ENCODE measurements at regions of chr19 and their contacts with region 1.

Region 1: DNA sequence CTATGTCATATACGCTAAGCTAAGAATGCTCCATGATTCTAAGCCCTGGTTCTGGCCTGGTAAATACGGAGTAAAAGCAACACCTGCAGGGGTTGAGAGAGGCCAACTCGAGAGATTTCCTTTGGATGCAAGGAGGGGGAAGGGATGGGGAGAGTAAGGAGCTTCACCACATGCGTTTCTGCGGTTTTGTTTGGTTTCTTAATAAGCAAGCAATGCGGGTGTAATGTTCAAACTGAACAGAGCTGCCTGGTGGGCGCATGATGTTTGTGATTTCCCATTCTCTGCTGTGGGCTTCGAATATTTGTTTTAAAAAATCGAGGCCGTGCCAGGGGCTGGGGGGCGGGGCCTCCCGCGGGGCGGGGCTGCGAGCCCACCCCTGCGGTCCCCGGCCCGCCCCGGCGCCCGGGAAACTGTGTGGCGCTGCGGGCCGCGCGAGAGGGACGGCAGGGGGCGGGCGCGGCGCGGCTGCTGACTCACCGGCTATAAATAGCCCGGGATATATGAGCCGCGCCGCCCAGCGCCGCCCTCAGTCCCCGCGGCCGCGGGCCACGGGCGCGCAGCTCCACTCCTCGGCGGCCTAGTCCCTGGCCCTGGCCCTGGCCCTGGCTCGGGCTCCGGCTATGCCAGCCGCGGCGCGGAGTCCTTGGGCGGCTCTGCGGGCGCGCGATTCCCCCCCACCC is 5.1 kb downstream of the BBC3 start:
- DNase-seq: peak; percentile 91 to 96
- ATAC-seq: peak; percentile 90
- H3K4me3 ChIP-seq: peak overlapping the region; percentile 24 to 41
- H3K27ac ChIP-seq: peak overlapping the region; percentile 94 to 99
- H3K4me1 ChIP-seq: no peaks in the 10 kb centered on the region
- H3K27me3 ChIP-seq: peaks cover 0 to 2% of the 10 kb centered on the region in 2 donors

Region 2: DNA sequence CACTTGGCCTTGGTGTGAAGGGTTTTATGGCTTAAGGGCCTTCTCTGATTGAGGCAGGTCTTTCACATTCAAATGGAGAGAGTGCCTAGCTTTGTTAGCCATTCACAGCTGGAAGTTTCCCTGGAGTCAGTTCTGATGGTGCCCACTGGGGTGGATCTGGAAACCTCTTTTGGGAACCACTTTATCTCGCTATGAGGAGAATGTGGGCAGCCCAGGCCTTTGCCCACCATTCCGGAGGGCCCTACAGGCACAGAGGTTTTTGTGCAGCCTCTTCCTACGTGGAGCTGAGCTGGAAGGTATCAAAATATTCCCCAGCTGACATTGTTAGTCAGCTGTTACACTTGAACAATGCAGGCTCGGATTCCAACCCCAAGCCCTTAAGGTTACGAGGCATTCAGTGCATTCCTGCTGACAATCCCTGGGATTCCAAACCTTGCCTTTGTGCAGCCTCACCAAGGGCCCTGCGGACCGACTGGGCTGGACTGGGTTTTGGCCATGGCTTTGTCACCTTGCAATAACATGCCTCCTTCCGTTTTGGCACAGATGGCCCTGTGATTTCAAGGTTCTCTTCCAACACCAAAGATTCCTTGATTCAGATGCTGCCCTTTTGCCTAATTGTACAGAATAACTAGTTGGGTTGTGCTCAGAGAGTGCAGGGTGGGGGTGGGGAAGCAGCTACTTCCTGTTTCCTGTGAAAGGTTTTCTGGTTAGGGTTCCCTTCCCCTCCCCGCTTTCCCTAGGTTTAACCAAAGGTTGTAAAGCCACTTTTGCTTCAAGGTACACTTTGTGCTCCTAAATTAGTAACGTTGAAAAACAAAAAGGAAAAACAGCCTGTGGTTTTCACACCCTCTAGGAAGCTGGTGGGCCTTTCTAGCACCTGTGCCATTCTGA is 68.2 kb before region 1 on chr19:
- intact Hi-C with region 1: loop called in 1 of 2 experiments (anchors 2 kb)
- DNase-seq: no peak
- ATAC-seq: peak; percentile 56
- H3K4me3 ChIP-seq: no peak overlapping the region
- H3K27ac ChIP-seq: peak overlapping the region; percentile 71 to 90
- H3K4me1 ChIP-seq: peaks cover 0 to 3% of the 10 kb centered on the region in 2 donors
- H3K27me3 ChIP-seq: no peaks in the 10 kb centered on the region